Psoas muscle (tissue), 8 donors: ENCODE measurements at regions of chr1 and their contacts with region 1.

Region 1: DNA sequence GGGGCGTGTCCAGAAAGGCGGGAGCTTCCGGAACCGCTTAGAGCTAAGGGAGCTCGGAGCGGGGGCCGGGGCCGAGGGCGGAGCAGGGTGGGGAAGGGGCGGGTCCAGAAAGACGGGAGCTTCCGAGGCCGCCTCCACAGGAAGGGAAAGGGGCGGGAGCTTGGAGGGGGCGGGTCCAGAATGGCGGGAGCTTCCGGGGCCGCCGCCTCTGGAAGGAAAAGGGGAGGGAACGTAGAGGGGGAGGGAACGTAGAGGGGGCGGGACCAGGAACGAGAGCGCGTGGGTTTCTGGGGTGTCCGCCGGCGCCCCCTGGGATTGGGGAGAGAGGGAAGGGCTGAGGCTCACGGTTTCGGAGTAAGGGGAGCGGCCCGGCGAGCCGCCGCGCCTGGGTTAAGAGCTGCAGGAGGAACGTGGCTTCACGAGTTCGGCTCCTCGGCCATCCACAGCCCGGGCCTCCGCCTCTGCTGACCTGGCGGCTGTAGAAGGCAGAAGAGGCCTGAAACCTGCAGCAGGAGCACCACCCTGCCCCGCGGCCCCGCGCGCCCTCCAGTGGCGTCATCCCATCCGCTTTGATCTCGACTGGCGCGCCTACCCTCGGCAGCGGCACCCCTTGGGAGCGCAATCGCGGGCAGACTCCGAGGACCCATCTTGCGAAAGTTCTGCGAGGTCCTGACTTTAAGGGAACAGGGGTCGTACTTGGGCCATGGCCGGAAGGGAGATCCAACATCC is 22.9 kb upstream of the HPDL start:
- DNase-seq: peak; percentile 99
- ATAC-seq: peak; percentile 91 to 96 (median 92)
- H3K4me3 ChIP-seq: peak overlapping the region; percentile 75
- H3K27ac ChIP-seq: peak overlapping the region; percentile 94
- H3K4me1 ChIP-seq: peaks cover 14% of the 10 kb centered on the region
- H3K27me3 ChIP-seq: no peaks in the 10 kb centered on the region
- CTCF ChIP-seq: peak; percentile 59

Region 2: GRCh38 chr1:44786138-44786840 is 517.5 kb before region 1 on chr1:
- intact Hi-C with region 1: loop called in 1 of 2 experiments (anchors 5 kb)
- DNase-seq: peak; percentile 72 to 85
- ATAC-seq: peak; percentile 77 to 89 (median 84)
- H3K4me3 ChIP-seq: peak overlapping the region; percentile 68
- H3K27ac ChIP-seq: peak overlapping the region; percentile 48
- H3K4me1 ChIP-seq: peaks cover 19% of the 10 kb centered on the region
- H3K27me3 ChIP-seq: no peaks in the 10 kb centered on the region
- CTCF ChIP-seq: peak; percentile 99

Region 3: GRCh38 chr1:44842862-44843655 is 460.7 kb before region 1 on chr1 and contains the start of gene PTCH2:
- intact Hi-C with region 1: loop called (anchors 5 kb)
- DNase-seq: peak; percentile 68 to 85
- ATAC-seq: peak; percentile 84 to 91 (median 88)
- H3K4me3 ChIP-seq: peak within 1 kb of the TSS; percentile 70
- H3K27ac ChIP-seq: no peak within 1 kb of the TSS
- H3K4me1 ChIP-seq: no peaks in the 10 kb centered on the region
- H3K27me3 ChIP-seq: no peaks in the 10 kb centered on the region
- CTCF ChIP-seq: no peak
- total RNA-seq, gene PTCH2: 0.12 to 1.0 (median 0.36) TPM

Region 4: GRCh38 chr1:45205910-45206721 is 97.6 kb before region 1 on chr1 and contains the start of gene ZSWIM5:
- intact Hi-C with region 1: loop called in 1 of 2 experiments (anchors 10 kb)
- DNase-seq: peak; percentile 73 to 82
- ATAC-seq: peak; percentile 92 to 95 (median 94)
- H3K4me3 ChIP-seq: peak within 1 kb of the TSS; percentile 97
- H3K27ac ChIP-seq: peak within 1 kb of the TSS; percentile 73
- H3K4me1 ChIP-seq: peaks cover 12% of the 10 kb centered on the region
- H3K27me3 ChIP-seq: peaks cover 0 to 3% (median 0%) of the 10 kb centered on the region in 3 donors
- CTCF ChIP-seq: no peak
- total RNA-seq, gene ZSWIM5: 0.50 to 0.98 (median 0.70) TPM

Region 5: DNA sequence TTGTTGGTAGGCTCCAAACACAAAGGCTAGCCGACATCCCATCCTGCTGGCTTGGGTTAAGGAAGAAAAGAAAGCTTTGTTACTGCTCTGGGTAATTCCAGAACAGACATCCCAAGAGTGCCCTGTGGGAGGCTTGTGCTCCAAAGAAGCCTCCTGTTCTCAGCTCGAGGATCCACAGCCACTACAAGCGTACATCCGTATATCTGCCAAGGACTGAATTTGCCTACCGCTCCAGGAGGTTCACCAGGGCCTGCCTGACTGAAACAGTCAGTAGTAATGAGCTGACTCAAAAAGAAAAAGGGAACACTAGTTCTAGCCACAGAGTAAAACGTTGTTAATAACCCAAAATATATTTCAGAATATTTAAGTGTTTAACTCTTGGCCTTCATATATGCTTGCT is 61.3 kb after region 1 on chr1:
- intact Hi-C with region 1: no loop called
- DNase-seq: no peak
- ATAC-seq: no peak
- H3K4me3 ChIP-seq: no peak overlapping the region
- H3K27ac ChIP-seq: no peak overlapping the region
- H3K4me1 ChIP-seq: peaks cover 15% of the 10 kb centered on the region
- H3K27me3 ChIP-seq: no peaks in the 10 kb centered on the region
- CTCF ChIP-seq: no peak

Region 6: DNA sequence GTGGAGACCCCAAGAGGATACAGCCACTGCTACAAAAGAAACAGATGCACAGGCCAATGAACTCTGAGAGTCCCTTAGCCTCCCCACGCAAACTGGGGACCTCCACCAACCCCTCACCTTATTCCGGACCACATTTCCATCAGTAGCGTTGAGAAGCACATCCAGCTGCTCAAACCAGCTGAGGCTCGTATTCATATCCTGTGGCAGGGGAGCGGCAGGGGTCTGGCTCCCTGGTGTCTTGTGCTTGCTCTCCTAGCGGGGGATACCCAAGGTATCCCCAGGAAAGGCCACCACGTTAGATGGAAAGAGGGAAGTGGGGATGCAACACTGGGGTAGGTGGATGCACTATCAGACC is 195.6 kb after region 1 on chr1:
- intact Hi-C with region 1: loop called in 1 of 2 experiments (anchors 5 kb)
- DNase-seq: no peak
- ATAC-seq: peak in 1 of 4 donors; percentile 0
- H3K4me3 ChIP-seq: peak overlapping the region; percentile 83
- H3K27ac ChIP-seq: peak overlapping the region; percentile 59
- H3K4me1 ChIP-seq: peaks cover 16% of the 10 kb centered on the region
- H3K27me3 ChIP-seq: no peaks in the 10 kb centered on the region
- CTCF ChIP-seq: no peak